ENCODE measurements at regions of chr10 and their contacts with region 1.

Region 1: GRCh38 chr10:70146489-70147258 is at the start of gene TYSND1:
- DNase-seq: peak; percentile 93 to 99 (median 98)

Region 2: GRCh38 chr10:70169649-70170364 is 23.1 kb after region 1 on chr10:
- intact Hi-C with region 1: loop called (anchors 2 kb)
- DNase-seq: peak in 6 of 42 donors; percentile 5 to 37 (median 26)